ENCODE measurements at regions of chr12 and their contacts with region 1.

Region 1: GRCh38 chr12:101604132-101604531 is 9.4 kb downstream of the MYBPC1 start:
- DNase-seq: no peak
- H3K4me3 Mint-ChIP-seq: no peak overlapping the region
- H3K27ac Mint-ChIP-seq: no peak overlapping the region
- H3K4me1 Mint-ChIP-seq: peaks cover 9% of the 10 kb centered on the region
- H3K27me3 Mint-ChIP-seq: no peaks in the 10 kb centered on the region

Region 2: DNA sequence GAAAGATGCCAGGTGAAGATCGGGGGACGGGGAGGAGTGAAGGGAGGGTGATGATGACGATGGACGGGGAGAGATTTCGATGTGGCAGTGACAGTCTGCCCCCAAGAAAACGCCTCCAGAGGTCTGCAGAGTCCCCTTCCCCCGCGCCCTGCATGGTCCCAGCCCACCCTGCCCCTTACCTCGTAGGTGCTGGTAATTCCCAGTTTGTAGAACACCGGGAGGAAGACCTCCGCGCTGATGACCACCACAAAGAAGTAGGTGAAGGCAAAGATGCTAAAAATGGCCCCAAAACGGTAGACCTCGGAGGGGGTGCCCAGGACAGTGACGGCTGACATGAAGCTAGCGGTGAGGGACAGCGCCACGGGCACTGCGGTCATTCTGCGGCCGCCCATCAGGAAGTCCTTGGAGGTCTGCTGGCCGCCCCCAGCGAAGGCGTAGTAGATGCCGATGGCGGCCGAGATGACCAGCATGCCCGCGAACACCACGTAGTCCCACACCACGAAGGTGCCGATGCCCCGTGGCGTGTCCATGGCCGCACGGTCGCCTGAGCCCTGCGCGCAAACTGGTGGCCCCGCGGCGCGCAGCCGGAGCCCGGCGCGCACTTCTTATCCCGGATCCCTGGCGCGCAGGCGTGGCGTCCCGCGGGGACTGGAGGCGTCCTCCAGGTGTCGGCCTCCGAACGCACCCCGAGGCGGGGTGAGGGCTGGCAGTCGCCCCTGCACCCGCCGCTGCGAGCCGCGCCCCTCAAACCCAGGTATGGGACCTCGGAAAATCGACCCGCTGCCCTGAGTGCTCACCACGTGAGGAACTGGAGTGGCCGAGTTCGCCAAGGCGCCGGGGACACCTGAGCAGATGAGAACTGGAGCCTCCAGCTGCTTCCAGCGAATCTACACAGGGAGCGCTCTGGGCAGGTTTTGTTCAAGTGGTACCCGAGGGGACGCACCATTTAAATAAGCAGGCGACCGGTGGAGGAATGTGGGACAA is 394.5 kb before region 1 on chr12 and contains the start of gene SLC5A8:
- CTCF ChIA-PET with region 1: no interaction called
- intact Hi-C with region 1: no loop called
- DNase-seq: no peak
- H3K4me3 Mint-ChIP-seq: no peak within 1 kb of the TSS
- H3K27ac Mint-ChIP-seq: no peak within 1 kb of the TSS
- H3K4me1 Mint-ChIP-seq: peaks cover 1% of the 10 kb centered on the region
- H3K27me3 Mint-ChIP-seq: peaks cover 42% of the 10 kb centered on the region
- total RNA-seq, gene SLC5A8: not detected

Region 3: GRCh38 chr12:101564912-101565311 is 39.2 kb before region 1 on chr12:
- CTCF ChIA-PET with region 1: no interaction called
- intact Hi-C with region 1: loop called (anchors 1 kb)
- DNase-seq: peak; percentile 14
- H3K4me3 Mint-ChIP-seq: no peak overlapping the region
- H3K27ac Mint-ChIP-seq: no peak overlapping the region
- H3K4me1 Mint-ChIP-seq: peaks cover 21% of the 10 kb centered on the region
- H3K27me3 Mint-ChIP-seq: peaks cover 10% of the 10 kb centered on the region

Region 4: GRCh38 chr12:101592921-101593320 is 11.2 kb before region 1 on chr12:
- CTCF ChIA-PET with region 1: no interaction called
- intact Hi-C with region 1: no loop called
- DNase-seq: no peak
- H3K4me3 Mint-ChIP-seq: no peak overlapping the region
- H3K27ac Mint-ChIP-seq: no peak overlapping the region
- H3K4me1 Mint-ChIP-seq: no peaks in the 10 kb centered on the region
- H3K27me3 Mint-ChIP-seq: peaks cover 8% of the 10 kb centered on the region

Region 5: DNA sequence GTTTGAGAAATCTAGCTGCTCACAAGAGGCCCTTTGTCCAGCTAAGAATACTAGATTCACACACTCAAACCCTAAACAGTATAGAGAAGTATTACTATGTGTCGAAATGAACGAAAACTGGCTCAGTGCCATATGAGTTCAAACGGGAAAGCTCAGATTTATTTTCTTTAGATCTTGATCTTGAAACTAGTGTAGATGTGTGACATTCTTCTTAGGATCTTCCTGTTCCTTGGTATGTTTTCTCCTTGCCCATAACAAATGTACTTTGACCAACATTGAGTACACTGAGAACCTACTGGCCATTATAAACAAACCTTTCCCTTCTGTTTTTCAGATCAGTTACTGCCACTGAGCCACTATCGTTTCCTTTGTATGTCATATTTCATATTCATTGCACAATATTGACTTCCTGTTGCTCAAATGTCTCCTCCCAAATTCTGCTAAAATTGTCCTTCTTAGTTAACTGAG is 11.9 kb after region 1 on chr12:
- CTCF ChIA-PET with region 1: interaction called, 5 read pairs
- intact Hi-C with region 1: loop called (anchors 2 kb)
- DNase-seq: peak; percentile 31
- H3K4me3 Mint-ChIP-seq: no peak overlapping the region
- H3K27ac Mint-ChIP-seq: no peak overlapping the region
- H3K4me1 Mint-ChIP-seq: peaks cover 17% of the 10 kb centered on the region
- H3K27me3 Mint-ChIP-seq: peaks cover 2% of the 10 kb centered on the region

Region 6: GRCh38 chr12:102421801-102422583 is 817.9 kb after region 1 on chr12:
- CTCF ChIA-PET with region 1: no interaction called
- intact Hi-C with region 1: no loop called
- DNase-seq: no peak
- H3K4me3 Mint-ChIP-seq: no peak overlapping the region
- H3K27ac Mint-ChIP-seq: no peak overlapping the region
- H3K4me1 Mint-ChIP-seq: no peaks in the 10 kb centered on the region
- H3K27me3 Mint-ChIP-seq: peaks cover 19% of the 10 kb centered on the region